ENCODE measurements at regions of chr19 and their contacts with region 1.

Region 1: GRCh38 chr19:13880059-13881043 is 3.4 kb downstream of the NANOS3 start:
- DNase-seq: peak; percentile 89 to 99 (median 93)
- ATAC-seq: peak; percentile 99
- H3K4me3 ChIP-seq: peak overlapping the region; percentile 49
- H3K4me3 Mint-ChIP-seq: peak overlapping the region; percentile 49 to 89 (median 66)
- H3K27ac ChIP-seq: peak overlapping the region; percentile 48
- H3K27ac Mint-ChIP-seq: peak overlapping the region in 8 of 9 donors; percentile 12 to 86 (median 70)
- H3K4me1 ChIP-seq: peaks cover 36 to 38% of the 10 kb centered on the region in 2 donors
- H3K4me1 Mint-ChIP-seq: peaks cover 6 to 43% (median 34%) of the 10 kb centered on the region in 7 donors
- H3K27me3 ChIP-seq: no peaks in the 10 kb centered on the region
- H3K27me3 Mint-ChIP-seq: no peaks in the 10 kb centered on the region

Region 2: GRCh38 chr19:13905938-13906904 is 25.9 kb after region 1 on chr19 and contains the starts of genes BRME1 and CC2D1A:
- CTCF ChIA-PET with region 1: interaction called, 4 read pairs
- POLR2A ChIA-PET with region 1: interaction called, 4 read pairs
- intact Hi-C with region 1: loop called (anchors 1 to 2 kb)
- DNase-seq: peak; percentile 87 to 94 (median 92)
- ATAC-seq: peak; percentile 100
- H3K4me3 ChIP-seq: peak within 1 kb of the TSS; percentile 84
- H3K4me3 Mint-ChIP-seq: peak within 1 kb of the TSS; percentile 84 to 94 (median 88)
- H3K27ac ChIP-seq: peak within 1 kb of the TSS; percentile 77
- H3K27ac Mint-ChIP-seq: peak within 1 kb of the TSS; percentile 83 to 94 (median 91)
- H3K4me1 ChIP-seq: peaks cover 12% of the 10 kb centered on the region in 2 donors
- H3K4me1 Mint-ChIP-seq: peaks cover 12 to 29% (median 16%) of the 10 kb centered on the region in 7 donors
- H3K27me3 ChIP-seq: no peaks in the 10 kb centered on the region
- H3K27me3 Mint-ChIP-seq: no peaks in the 10 kb centered on the region
- total RNA-seq, gene BRME1: 1.8 to 13.7 (median 2.9) TPM
- total RNA-seq, gene CC2D1A: 21.0 to 33.1 (median 29.8) TPM

Region 3: DNA sequence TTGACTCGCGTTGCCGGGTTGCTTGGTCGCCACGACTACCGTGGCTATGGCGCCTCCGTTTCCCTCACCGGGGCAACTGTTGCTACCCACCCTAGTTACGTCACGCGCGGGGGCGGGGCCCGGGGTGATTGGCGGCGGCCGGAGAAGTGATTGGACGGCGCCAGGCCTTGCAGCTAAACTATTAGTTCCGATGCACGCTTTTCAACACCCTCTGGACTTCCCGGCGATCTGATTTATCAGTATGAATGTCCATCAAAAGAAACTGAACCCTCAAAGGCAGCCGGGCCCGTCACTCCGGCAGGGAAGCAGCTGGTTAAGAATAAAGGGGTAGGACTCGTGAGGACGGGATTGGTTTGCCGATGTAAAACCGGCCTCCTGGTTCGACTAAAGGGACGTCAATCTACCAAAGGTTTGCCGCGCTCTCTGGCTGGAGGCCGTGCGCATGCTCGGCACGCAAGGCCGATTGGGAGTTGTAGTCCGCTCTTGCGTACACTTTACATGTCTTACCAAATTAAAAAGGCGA is 126.0 kb after region 1 on chr19 and contains the start of gene RFX1:
- CTCF ChIA-PET with region 1: no interaction called
- POLR2A ChIA-PET with region 1: interaction called, 3 read pairs
- intact Hi-C with region 1: loop called (anchors 1 kb)
- DNase-seq: peak; percentile 99 to 100 (median 100)
- ATAC-seq: peak; percentile 79
- H3K4me3 ChIP-seq: peak within 1 kb of the TSS; percentile 77
- H3K4me3 Mint-ChIP-seq: peak within 1 kb of the TSS; percentile 91 to 98 (median 96)
- H3K27ac ChIP-seq: peak within 1 kb of the TSS; percentile 99
- H3K27ac Mint-ChIP-seq: peak within 1 kb of the TSS; percentile 98 to 100 (median 100)
- H3K4me1 ChIP-seq: peaks cover 36 to 41% of the 10 kb centered on the region in 2 donors
- H3K4me1 Mint-ChIP-seq: peaks cover 26 to 47% (median 38%) of the 10 kb centered on the region in 7 donors
- H3K27me3 ChIP-seq: no peaks in the 10 kb centered on the region
- H3K27me3 Mint-ChIP-seq: no peaks in the 10 kb centered on the region
- total RNA-seq, gene RFX1: 15.7 to 23.5 (median 20.5) TPM

Region 4: GRCh38 chr19:14073261-14073924 is 193.0 kb after region 1 on chr19:
- CTCF ChIA-PET with region 1: interaction called, 18 read pairs
- POLR2A ChIA-PET with region 1: interaction called, 7 read pairs
- intact Hi-C with region 1: loop called (anchors 1 kb)
- DNase-seq: peak; percentile 65 to 91 (median 87)
- ATAC-seq: peak; percentile 86
- H3K4me3 ChIP-seq: peak overlapping the region; percentile 91
- H3K4me3 Mint-ChIP-seq: peak overlapping the region; percentile 87 to 99 (median 93)
- H3K27ac ChIP-seq: peak overlapping the region; percentile 50
- H3K27ac Mint-ChIP-seq: peak overlapping the region in 7 of 9 donors; percentile 62 to 89 (median 78)
- H3K4me1 ChIP-seq: peaks cover 9 to 18% of the 10 kb centered on the region in 2 donors
- H3K4me1 Mint-ChIP-seq: peaks cover 7 to 24% (median 10%) of the 10 kb centered on the region in 7 donors
- H3K27me3 ChIP-seq: no peaks in the 10 kb centered on the region
- H3K27me3 Mint-ChIP-seq: peaks cover 0 to 10% (median 0%) of the 10 kb centered on the region in 5 donors

Region 5: DNA sequence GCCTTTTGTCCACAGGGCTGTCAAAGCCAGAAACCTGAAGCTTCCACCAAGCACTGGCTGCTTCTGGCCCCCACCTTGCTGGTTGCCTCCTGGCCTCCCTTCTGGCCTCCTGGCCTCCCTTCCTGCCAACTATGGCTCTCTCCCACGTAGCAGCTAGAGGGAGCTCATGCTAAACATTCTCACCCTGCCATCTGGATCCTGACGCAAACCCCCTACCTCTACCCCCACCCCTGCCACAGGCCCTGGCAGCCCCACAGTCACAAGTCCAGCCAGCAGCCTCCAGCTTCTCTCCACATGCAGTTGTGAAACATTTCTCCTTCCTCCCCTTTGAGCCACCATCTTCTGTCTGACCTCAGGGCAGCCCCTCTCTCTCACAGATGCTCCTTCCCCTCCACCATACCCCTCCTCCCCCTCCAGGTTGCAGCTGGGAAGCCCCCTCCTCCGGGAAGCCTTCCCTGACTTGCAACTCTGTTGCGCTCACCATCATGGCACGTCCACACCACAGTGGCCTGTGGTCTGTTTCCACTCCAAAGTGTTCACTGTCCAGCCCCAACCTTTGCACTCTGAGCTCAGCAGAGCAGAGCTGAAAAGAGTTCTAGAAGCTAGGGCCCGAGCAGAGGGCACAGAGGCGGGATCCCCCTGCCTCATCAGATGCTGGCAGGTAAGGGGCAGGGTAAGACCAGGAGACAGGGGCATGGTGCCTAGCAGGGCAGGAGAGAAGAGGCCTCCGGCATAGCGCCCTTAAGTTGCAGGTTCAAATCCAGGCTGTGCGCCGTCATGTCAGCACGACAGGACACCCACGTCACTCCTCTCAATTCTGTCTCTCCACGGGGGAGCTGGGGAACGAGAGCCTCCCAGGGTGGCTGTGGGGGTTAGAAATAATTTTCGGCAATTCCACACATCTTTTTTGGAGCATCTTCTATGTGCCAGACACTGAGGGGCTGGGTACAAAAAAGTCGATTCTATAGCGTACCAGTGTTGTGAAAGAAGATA is 318.3 kb after region 1 on chr19:
- CTCF ChIA-PET with region 1: no interaction called
- POLR2A ChIA-PET with region 1: no interaction called
- intact Hi-C with region 1: loop called in 1 of 2 experiments (anchors 1 kb)
- DNase-seq: no peak
- ATAC-seq: no peak
- H3K4me3 ChIP-seq: no peak overlapping the region
- H3K4me3 Mint-ChIP-seq: no peak overlapping the region
- H3K27ac ChIP-seq: no peak overlapping the region
- H3K27ac Mint-ChIP-seq: no peak overlapping the region
- H3K4me1 ChIP-seq: peaks cover 0 to 4% of the 10 kb centered on the region in 2 donors
- H3K4me1 Mint-ChIP-seq: peaks cover 19 to 45% (median 34%) of the 10 kb centered on the region in 7 donors
- H3K27me3 ChIP-seq: no peaks in the 10 kb centered on the region
- H3K27me3 Mint-ChIP-seq: peaks cover 0 to 11% (median 0%) of the 10 kb centered on the region in 5 donors

Region 6: DNA sequence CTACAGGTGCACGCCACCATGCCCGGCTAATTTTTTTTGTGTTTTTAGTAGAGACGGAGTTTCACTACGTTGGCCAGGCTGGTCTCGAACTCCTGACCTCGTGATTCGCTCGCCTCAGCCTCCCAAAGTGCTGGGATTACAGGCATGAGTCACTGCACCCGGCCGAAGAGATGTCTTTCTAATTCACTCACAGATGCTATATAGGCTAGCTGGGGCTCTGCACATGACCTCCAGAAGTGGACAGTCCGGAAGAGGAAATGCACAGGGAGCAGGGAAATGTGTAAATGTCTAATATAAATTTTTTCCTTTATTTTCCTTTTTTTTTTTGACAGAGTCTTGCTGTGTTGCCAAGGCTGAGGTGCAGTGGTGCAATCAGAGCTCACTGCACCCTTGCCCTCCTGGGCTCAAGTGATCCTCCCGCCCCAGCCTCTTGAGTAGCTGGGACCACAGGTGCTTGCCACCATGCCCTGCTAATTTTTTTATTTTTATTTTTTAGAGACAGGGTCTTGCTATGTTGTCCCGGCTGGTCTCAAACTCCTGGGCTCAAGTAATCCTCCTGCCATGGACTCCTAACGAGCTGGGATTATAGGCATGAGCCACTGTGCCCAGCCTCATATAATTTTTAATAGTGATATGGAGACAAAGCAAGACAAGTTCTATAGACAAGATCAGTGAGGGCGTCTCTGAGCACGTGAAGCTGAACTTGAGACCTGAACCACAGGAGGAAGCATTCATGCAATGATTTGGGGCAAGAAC is 607.2 kb after region 1 on chr19:
- CTCF ChIA-PET with region 1: no interaction called
- POLR2A ChIA-PET with region 1: no interaction called
- intact Hi-C with region 1: loop called (anchors 5 to 10 kb)
- DNase-seq: no peak
- ATAC-seq: no peak
- H3K4me3 ChIP-seq: no peak overlapping the region
- H3K4me3 Mint-ChIP-seq: no peak overlapping the region
- H3K27ac ChIP-seq: no peak overlapping the region
- H3K27ac Mint-ChIP-seq: peak overlapping the region in 1 of 9 donors; percentile 48
- H3K4me1 ChIP-seq: peaks cover 0 to 9% of the 10 kb centered on the region in 2 donors
- H3K4me1 Mint-ChIP-seq: peaks cover 5 to 12% (median 11%) of the 10 kb centered on the region in 7 donors
- H3K27me3 ChIP-seq: no peaks in the 10 kb centered on the region
- H3K27me3 Mint-ChIP-seq: no peaks in the 10 kb centered on the region

Measured in naive thymus-derived CD4-positive, alpha-beta T cell (primary cell).